Esophagus muscularis mucosa (tissue), 4 donors: ENCODE measurements at regions of chr11 and their contacts with region 1.

Region 1: DNA sequence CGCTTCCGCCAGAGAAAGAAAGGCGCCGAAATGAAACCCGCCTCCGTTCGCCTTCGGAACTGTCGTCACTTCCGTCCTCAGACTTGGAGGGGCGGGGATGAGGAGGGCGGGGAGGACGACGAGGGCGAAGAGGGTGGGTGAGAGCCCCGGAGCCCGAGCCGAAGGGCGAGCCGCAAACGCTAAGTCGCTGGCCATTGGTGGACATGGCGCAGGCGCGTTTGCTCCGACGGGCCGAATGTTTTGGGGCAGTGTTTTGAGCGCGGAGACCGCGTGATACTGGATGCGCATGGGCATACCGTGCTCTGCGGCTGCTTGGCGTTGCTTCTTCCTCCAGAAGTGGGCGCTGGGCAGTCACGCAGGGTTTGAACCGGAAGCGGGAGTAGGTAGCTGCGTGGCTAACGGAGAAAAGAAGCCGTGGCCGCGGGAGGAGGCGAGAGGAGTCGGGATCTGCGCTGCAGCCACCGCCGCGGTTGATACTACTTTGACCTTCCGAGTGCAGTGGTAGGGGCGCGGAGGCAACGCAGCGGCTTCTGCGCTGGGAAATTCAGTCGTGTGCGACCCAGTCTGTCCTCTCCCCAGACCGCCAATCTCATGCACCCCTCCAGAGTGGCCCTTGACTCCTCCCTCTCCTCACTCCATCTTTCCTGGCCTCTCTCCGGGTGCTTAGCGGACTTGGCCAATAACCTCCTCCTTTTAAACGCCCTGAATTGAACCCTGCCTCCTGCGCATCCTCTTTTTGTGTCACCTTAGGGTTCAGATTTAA is at the start of gene ATM:
- DNase-seq: peak; percentile 100
- H3K4me3 ChIP-seq: peak within 1 kb of the TSS; percentile 68 to 82 (median 77)
- H3K27ac ChIP-seq: peak within 1 kb of the TSS; percentile 90 to 95 (median 94)
- H3K4me1 ChIP-seq: peaks cover 30 to 44% (median 42%) of the 10 kb centered on the region in 4 donors
- H3K27me3 ChIP-seq: no peaks in the 10 kb centered on the region
- CTCF ChIP-seq: peak; percentile 59 to 85 (median 59)
- EP300 ChIP-seq: no peak
- POLR2A ChIP-seq: peak; percentile 31
- total RNA-seq, gene ATM: 28.3 to 73.1 (median 34.1) TPM

Region 2: DNA sequence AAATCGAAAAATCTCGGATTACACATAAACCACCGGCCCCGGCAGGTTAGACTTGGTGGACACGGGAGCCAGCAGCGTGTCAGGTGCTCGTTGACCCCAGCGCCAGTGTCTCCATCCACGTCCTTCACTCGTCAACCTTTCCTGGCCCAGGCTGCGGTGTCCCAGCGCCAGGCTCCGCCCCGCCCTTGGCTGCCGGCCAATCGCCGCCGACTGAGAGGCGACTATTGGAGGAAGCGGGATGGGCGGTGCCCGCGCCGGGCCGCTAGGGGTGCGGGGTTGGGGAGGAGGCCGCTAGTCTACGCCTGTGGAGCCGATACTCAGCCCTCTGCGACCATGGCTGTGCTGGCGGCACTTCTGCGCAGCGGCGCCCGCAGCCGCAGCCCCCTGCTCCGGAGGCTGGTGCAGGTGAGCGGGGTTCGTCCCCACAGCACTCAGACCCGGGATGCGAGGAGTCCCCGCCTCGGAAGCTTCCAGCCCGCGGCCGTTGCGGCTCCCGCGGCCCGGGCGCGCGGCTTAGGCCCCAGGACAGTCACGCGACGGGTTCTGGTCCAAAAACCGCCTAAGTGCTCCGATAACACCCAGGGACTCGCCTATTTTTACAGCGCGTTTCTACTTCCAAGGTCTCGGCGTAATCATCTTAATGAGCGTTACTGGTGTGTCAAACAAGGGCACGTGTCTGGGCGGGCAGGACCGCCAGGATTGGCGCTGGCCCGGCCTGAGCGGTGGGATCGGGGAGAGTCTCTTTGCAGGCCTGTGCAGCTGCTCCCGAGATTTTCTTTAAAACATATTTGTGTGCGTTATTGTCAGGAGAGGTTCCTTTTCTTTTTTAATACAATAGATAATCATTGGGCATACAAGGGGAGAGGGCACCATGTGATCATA is 101.4 kb before region 1 on chr11 and contains the start of gene ACAT1:
- intact Hi-C with region 1: loop called (anchors 2 kb)
- DNase-seq: peak; percentile 99
- H3K4me3 ChIP-seq: peak within 1 kb of the TSS; percentile 68 to 90 (median 90)
- H3K27ac ChIP-seq: peak within 1 kb of the TSS; percentile 90 to 98 (median 98)
- H3K4me1 ChIP-seq: peaks cover 30 to 48% (median 45%) of the 10 kb centered on the region in 4 donors
- H3K27me3 ChIP-seq: no peaks in the 10 kb centered on the region
- CTCF ChIP-seq: peak; percentile 37 to 43 (median 41)
- EP300 ChIP-seq: no peak
- POLR2A ChIP-seq: peak; percentile 92
- total RNA-seq, gene ACAT1: 89.6 to 191 (median 139) TPM